Activated B cell treated with CpG ODN at 0.5 μM for 24 hours (primary cell): ENCODE measurements at regions of chr12 and their contacts with region 1.

Region 1: DNA sequence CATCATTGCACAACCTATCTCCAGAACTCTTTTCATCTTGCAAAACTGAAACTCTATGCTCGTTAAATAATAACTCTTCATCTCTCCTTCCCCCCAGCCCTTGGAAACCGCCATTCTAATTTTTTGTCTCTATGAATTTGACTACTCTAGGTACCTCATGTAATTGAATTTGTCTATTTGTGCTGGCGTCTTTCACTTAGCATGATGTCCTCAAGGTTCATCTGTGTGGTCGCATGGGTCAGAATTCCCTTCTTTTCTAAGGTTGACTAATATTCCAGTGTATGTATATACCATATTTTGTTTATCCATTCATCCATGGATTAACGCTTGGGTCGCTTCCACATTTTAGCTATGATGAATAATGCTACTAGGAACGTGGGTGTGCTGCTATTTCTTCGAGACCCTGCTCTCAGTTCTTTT is 80.1 kb downstream of the PLXNC1 start:
- DNase-seq: no peak
- ATAC-seq: no peak
- H3K4me3 Mint-ChIP-seq: no peak overlapping the region
- H3K27ac Mint-ChIP-seq: no peak overlapping the region
- H3K4me1 Mint-ChIP-seq: peaks cover 37% of the 10 kb centered on the region
- H3K27me3 Mint-ChIP-seq: no peaks in the 10 kb centered on the region
- CTCF ChIP-seq: no peak

Region 2: DNA sequence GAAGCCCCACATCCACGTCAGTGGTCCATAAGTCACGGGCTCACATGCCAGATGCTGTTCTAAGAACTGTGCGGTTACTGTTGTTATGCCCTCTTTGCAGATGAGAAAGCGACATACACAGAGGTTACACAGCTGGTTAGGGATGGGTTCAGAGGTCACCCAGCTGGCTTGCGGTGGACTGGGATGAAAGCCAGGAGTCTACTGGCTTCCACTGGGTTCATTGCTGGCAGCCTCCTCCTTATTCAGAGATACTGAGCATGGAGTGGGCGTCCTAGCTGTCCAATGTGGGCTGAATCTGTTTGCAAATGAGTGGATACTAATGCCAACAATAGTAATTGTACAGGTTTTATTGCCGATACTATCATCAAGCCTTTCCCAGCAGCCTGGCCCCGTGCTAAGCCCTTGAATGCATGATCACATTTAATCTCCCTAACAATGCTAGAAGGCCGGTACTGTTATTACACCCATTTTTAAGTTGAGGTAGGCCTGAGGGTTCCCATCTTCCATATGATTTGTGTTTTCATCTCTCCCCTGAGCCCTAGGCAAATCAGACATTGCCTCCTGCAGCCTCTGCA is 49.0 kb after region 1 on chr12:
- CTCF ChIA-PET with region 1: no interaction called
- POLR2A ChIA-PET with region 1: no interaction called
- intact Hi-C with region 1: loop called (anchors 5 kb)
- DNase-seq: no peak
- ATAC-seq: no peak
- H3K4me3 Mint-ChIP-seq: no peak overlapping the region
- H3K27ac Mint-ChIP-seq: no peak overlapping the region
- H3K4me1 Mint-ChIP-seq: peaks cover 17% of the 10 kb centered on the region
- H3K27me3 Mint-ChIP-seq: no peaks in the 10 kb centered on the region
- CTCF ChIP-seq: no peak